ENCODE measurements at regions of chr7 and their contacts with region 1.

Region 1: DNA sequence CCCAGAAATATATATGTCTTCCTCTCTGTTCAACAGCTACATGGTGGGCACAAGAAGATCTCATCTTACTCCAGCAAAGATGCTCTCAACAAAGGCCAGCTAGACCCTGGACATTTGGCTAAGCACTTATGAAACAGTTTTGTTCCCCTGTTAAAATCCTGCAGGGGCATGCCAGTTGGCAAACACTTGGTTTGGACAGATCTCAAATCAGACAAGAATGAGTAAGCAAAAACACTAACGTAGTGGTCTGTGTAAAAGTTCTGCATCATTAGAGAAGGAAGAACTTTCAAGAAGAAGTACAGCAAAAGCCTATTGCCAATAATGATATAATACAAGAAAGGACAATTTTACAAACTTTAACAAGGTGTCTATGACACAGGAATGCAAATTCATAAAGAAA is 125.6 kb downstream of the CALN1 start:
- DNase-seq: no peak
- ATAC-seq: no peak
- H3K4me3 ChIP-seq: no peak overlapping the region
- H3K4me3 Mint-ChIP-seq: no peak overlapping the region
- H3K27ac ChIP-seq: no peak overlapping the region
- H3K27ac Mint-ChIP-seq: no peak overlapping the region
- H3K4me1 ChIP-seq: no peaks in the 10 kb centered on the region
- H3K4me1 Mint-ChIP-seq: no peaks in the 10 kb centered on the region
- H3K27me3 ChIP-seq: no peaks in the 10 kb centered on the region
- H3K27me3 Mint-ChIP-seq: no peaks in the 10 kb centered on the region

Region 2: GRCh38 chr7:71871446-71871845 is 415.1 kb before region 1 on chr7:
- CTCF ChIA-PET with region 1: no interaction called
- POLR2A ChIA-PET with region 1: interaction called in 1 of 2 experiments, 11 read pairs
- DNase-seq: no peak
- ATAC-seq: no peak
- H3K4me3 ChIP-seq: no peak overlapping the region
- H3K4me3 Mint-ChIP-seq: no peak overlapping the region
- H3K27ac ChIP-seq: no peak overlapping the region
- H3K27ac Mint-ChIP-seq: no peak overlapping the region
- H3K4me1 ChIP-seq: no peaks in the 10 kb centered on the region
- H3K4me1 Mint-ChIP-seq: no peaks in the 10 kb centered on the region
- H3K27me3 ChIP-seq: no peaks in the 10 kb centered on the region
- H3K27me3 Mint-ChIP-seq: no peaks in the 10 kb centered on the region

Region 3: DNA sequence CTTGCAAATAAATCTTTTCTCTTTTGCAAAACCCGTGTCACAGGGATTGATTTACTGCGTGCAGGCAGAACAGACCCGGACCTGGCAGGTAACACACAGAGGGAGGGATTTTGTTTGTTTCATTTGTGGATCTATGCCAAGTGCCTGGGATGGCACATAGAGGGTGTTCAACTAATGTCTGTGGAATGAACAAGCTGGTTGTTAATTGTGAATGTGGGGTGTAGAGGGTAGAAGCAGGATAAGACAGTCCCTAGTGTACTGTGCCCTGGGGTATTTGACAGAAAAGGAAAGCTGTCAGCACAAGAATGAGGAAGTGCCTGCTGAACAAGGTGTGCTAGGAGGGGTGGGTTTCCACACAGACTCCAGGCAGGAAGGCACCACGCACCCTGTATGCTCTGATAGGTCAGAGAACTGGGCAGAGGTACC is 206.2 kb before region 1 on chr7:
- CTCF ChIA-PET with region 1: no interaction called
- POLR2A ChIA-PET with region 1: no interaction called
- DNase-seq: no peak
- ATAC-seq: no peak
- H3K4me3 ChIP-seq: no peak overlapping the region
- H3K4me3 Mint-ChIP-seq: no peak overlapping the region
- H3K27ac ChIP-seq: no peak overlapping the region
- H3K27ac Mint-ChIP-seq: no peak overlapping the region
- H3K4me1 ChIP-seq: no peaks in the 10 kb centered on the region
- H3K4me1 Mint-ChIP-seq: no peaks in the 10 kb centered on the region
- H3K27me3 ChIP-seq: no peaks in the 10 kb centered on the region
- H3K27me3 Mint-ChIP-seq: no peaks in the 10 kb centered on the region

Region 4: DNA sequence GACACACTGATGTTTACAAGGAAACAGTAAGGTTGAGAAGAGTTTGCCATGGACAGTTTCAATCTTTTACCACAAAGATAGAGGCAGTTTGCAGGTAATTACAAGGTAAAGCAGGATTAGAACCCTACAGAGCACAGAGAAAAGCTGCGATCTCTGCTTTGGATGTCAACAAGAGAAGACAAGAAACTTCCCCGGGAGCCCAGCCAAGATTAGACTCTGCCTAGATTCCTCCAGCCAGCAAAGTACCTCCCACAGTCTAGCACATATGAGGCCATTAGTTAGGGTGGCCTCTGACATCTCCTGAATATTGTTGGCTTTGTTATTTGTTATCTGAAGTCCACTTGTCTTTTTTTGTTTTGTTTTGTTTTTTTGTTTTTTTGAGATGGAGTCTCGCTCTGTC is 52.4 kb before region 1 on chr7:
- CTCF ChIA-PET with region 1: no interaction called
- POLR2A ChIA-PET with region 1: no interaction called
- DNase-seq: no peak
- ATAC-seq: no peak
- H3K4me3 ChIP-seq: no peak overlapping the region
- H3K4me3 Mint-ChIP-seq: no peak overlapping the region
- H3K27ac ChIP-seq: no peak overlapping the region
- H3K27ac Mint-ChIP-seq: no peak overlapping the region
- H3K4me1 ChIP-seq: no peaks in the 10 kb centered on the region
- H3K4me1 Mint-ChIP-seq: no peaks in the 10 kb centered on the region
- H3K27me3 ChIP-seq: no peaks in the 10 kb centered on the region
- H3K27me3 Mint-ChIP-seq: no peaks in the 10 kb centered on the region

Measured in T-cell (primary cell).